CD4-positive, alpha-beta T cell (primary cell): ENCODE measurements at regions of chrX and their contacts with region 1.

Region 1: DNA sequence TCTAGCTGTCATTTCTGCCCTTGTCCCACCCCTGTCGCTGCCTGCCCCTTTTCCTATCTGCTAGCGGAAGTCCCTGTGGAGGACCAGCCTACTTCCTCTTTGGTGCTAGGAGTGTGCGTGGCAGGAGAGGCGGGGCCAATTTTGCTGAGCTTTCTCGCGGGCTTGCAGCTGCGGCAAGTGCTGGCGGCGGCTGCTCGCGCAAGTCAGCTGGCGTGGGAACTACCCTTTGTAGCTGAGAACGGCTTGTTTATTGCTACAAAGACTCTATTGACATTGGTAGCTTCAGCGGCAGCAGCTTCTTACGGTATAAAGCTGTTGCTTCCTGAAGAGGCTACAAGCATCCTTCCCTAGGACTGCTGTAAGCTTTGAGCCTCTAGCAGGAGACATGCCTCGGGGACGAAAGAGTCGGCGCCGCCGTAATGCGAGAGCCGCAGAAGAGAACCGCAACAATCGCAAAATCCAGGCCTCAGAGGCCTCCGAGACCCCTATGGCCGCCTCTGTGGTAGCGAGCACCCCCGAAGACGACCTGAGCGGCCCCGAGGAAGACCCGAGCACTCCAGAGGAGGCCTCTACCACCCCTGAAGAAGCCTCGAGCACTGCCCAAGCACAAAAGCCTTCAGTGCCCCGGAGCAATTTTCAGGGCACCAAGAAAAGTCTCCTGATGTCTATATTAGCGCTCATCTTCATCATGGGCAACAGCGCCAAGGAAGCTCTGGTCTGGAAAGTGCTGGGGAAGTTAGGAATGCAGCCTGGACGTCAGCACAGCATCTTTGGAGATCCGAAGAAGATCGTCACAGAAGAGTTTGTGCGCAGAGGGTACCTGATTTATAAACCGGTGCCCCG is at the start of gene MAGEH1:
- DNase-seq: peak; percentile 52 to 92 (median 74)
- ATAC-seq: peak; percentile 88
- H3K4me3 ChIP-seq: peak within 1 kb of the TSS; percentile 85
- H3K4me3 Mint-ChIP-seq: peak within 1 kb of the TSS; percentile 99
- H3K27ac ChIP-seq: peak within 1 kb of the TSS; percentile 80 to 82
- H3K27ac Mint-ChIP-seq: peak within 1 kb of the TSS; percentile 99
- H3K4me1 ChIP-seq: peaks cover 8% of the 10 kb centered on the region
- H3K4me1 Mint-ChIP-seq: peaks cover 27% of the 10 kb centered on the region
- H3K27me3 ChIP-seq: no peaks in the 10 kb centered on the region
- H3K27me3 Mint-ChIP-seq: no peaks in the 10 kb centered on the region
- CTCF ChIP-seq: no peak
- total RNA-seq, gene MAGEH1: 17.7 to 18.7 TPM

Region 2: GRCh38 chrX:55210931-55211681 is 241.1 kb before region 1 on chrX:
- CTCF ChIA-PET with region 1: no interaction called
- POLR2A ChIA-PET with region 1: no interaction called
- intact Hi-C with region 1: no loop called
- DNase-seq: no peak
- ATAC-seq: no peak
- H3K4me3 ChIP-seq: no peak overlapping the region
- H3K4me3 Mint-ChIP-seq: no peak overlapping the region
- H3K27ac ChIP-seq: no peak overlapping the region
- H3K27ac Mint-ChIP-seq: no peak overlapping the region
- H3K4me1 ChIP-seq: no peaks in the 10 kb centered on the region
- H3K4me1 Mint-ChIP-seq: no peaks in the 10 kb centered on the region
- H3K27me3 ChIP-seq: peaks cover 0 to 2% of the 10 kb centered on the region in 2 experiments
- H3K27me3 Mint-ChIP-seq: no peaks in the 10 kb centered on the region
- CTCF ChIP-seq: no peak

Region 3: DNA sequence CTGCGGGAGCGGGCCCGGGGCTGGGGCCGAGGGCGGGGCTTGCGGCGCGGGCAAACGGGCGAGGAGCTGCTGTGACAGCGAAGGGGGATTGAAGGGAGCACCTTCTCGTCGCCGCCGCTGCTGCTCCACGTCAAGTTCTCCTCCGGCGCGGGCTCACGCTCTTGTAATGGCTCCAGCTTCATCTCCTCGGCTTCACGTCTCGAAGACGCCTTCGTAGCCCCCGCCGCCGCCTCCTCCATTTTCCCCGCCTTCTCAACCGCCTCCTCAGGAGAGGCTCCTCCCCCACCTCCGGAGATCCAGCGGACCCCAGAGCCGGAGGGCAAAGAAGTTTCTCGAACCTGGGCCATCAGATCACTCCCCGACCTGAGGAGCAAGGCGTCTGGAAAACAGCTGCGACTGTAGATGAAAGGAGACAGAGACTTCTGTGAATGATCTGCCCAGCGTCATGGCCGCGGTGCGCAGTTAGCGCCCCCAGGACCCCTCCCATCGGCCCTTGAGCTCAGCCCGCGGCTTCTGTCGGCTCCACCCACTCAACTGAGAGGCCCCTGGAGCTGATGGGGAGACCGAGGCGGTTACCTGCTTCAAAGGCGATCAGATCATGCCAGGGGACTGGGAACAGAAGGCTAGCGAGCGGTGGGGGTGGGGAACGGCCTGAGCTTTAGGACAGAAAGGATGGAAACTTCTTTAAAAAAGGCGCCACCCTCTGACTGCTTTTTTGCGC is 36.5 kb after region 1 on chrX:
- CTCF ChIA-PET with region 1: interaction called, 4 read pairs
- POLR2A ChIA-PET with region 1: interaction called, 75 read pairs
- intact Hi-C with region 1: no loop called
- DNase-seq: peak; percentile 43 to 80 (median 59)
- ATAC-seq: peak; percentile 75
- H3K4me3 ChIP-seq: peak overlapping the region; percentile 87
- H3K4me3 Mint-ChIP-seq: peak overlapping the region; percentile 98
- H3K27ac ChIP-seq: peak overlapping the region; percentile 72 to 85
- H3K27ac Mint-ChIP-seq: peak overlapping the region; percentile 96
- H3K4me1 ChIP-seq: peaks cover 10% of the 10 kb centered on the region
- H3K4me1 Mint-ChIP-seq: peaks cover 17% of the 10 kb centered on the region
- H3K27me3 ChIP-seq: no peaks in the 10 kb centered on the region
- H3K27me3 Mint-ChIP-seq: no peaks in the 10 kb centered on the region
- CTCF ChIP-seq: no peak